ENCODE measurements at regions of chr1 and their contacts with region 1.

Region 1: DNA sequence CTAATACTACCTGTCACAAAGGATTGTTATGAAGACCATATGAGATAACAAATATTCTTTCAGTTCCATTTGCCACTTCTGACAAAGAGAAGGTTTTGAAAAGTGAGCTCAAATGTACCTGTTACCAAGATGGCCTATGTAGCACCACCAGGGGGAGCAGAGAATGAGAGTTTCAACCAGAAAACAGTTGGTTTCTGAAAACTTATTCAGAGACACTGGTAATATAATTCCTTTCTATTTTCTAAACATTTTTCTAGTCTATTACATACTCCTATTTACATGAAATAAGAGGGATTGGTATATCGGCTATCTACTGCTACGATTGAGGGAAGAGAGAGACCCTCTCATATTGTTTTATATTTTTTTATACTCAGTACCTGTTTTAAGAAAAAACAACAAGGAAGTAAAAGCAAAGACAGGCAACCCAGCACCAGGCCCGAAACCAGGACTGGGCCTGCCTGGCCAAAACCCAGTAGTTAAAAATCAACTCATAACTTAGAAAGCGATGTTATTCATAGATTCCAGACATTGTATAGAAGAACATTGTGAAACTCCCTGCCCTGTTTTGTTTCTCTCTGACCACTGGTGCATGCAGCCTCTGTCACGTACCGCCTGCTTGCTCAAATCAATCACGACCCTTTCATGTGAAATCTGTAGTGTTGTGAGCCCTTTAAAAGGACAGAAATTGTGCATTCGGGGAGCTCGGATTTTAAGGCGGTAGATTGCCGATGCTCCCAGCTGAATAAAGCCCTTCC is 48.3 kb downstream of the IL23R start:
- DNase-seq: peak; percentile 27
- H3K4me3 ChIP-seq: no peak overlapping the region
- H3K27ac ChIP-seq: no peak overlapping the region
- H3K4me1 ChIP-seq: no peaks in the 10 kb centered on the region
- H3K27me3 ChIP-seq: peaks cover 0 to 4% of the 10 kb centered on the region in 2 experiments
- CTCF ChIP-seq: peak; percentile 36 to 48
- POLR2A ChIP-seq: no peak

Region 2: DNA sequence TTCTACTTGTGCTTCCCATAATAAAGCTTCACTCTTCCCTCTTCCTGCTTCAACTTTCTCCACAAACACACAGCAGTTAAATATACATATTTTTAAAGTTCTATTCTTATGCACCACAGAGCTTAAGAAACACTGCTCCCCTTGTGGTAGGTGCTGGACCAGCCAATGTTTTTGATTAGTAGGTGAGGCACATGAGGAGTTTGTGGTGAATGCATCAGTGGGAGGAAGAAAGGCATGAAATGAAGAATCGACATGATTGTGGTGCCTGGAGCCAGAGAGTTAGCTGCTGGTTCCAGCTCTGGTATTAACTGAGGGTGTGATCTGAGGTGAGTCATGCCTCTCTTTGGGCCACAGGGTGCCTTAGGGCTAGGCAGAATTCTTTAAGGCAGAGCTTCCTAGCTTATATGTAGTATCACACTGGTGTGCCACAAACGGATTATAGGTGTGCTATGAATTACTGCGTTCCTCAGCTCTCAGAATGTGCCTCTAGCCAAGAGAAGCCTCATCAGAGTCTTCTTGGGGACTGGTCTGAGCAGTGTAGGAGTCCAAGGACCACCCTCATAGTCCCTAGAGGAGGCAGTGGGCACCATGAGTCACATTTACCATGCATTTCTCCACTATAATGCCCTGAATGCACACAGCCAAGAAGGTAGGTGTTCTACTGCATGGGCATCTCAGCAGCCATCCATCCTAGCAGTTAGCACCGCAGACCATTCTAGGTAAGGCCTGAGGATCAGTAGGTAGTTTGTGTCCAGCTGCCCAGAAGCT is 778.0 kb before region 1 on chr1:
- CTCF ChIA-PET with region 1: no interaction called
- POLR2A ChIA-PET with region 1: no interaction called
- dilution Hi-C with region 1: no loop called
- intact Hi-C with region 1: no loop called
- DNase-seq: peak; percentile 46
- H3K4me3 ChIP-seq: no peak overlapping the region
- H3K27ac ChIP-seq: no peak overlapping the region
- H3K4me1 ChIP-seq: peaks cover 34% of the 10 kb centered on the region
- H3K27me3 ChIP-seq: no peaks in the 10 kb centered on the region
- CTCF ChIP-seq: peak; percentile 13 to 31
- POLR2A ChIP-seq: no peak

Region 3: GRCh38 chr1:66764994-66765578 is 449.5 kb before region 1 on chr1:
- CTCF ChIA-PET with region 1: interaction called, 157 read pairs
- POLR2A ChIA-PET with region 1: no interaction called
- dilution Hi-C with region 1: no loop called
- intact Hi-C with region 1: loop called (anchors 1 kb)
- DNase-seq: peak; percentile 79
- H3K4me3 ChIP-seq: no peak overlapping the region
- H3K27ac ChIP-seq: no peak overlapping the region
- H3K4me1 ChIP-seq: no peaks in the 10 kb centered on the region
- H3K27me3 ChIP-seq: no peaks in the 10 kb centered on the region
- CTCF ChIP-seq: peak; percentile 48 to 54
- POLR2A ChIP-seq: no peak

Region 4: DNA sequence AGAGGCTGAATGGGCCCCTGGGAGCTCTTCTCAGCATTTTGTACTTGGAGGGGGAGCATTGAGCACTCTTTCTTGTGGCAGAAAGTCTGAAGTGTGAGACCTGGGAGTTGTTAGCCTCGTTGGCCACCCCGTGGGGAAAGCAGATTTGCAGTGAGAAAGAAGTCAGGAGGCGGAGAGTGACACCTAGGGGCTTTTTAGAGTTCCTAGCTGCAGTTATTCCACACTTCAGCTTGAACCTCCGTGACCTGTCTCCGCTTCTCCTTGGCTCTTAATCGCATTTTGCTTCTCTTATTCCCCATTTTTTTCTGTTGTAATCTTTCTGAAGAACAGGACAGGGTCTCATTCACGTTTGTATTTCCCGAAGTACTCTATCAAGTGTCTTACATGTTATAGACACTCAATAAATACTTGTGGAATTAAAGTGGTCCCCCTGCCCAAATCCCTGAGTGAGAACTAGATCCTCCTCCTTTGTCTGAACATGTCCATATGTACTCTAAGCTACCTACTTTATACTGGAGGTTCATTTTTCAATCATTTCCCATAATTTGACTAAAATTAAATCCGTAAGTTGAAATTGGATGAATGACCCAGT is 65.3 kb before region 1 on chr1:
- CTCF ChIA-PET with region 1: interaction called, 51 read pairs
- POLR2A ChIA-PET with region 1: no interaction called
- dilution Hi-C with region 1: no loop called
- intact Hi-C with region 1: loop called (anchors 5 kb)
- DNase-seq: peak; percentile 74
- H3K4me3 ChIP-seq: no peak overlapping the region
- H3K27ac ChIP-seq: no peak overlapping the region
- H3K4me1 ChIP-seq: no peaks in the 10 kb centered on the region
- H3K27me3 ChIP-seq: peaks cover 0 to 5% of the 10 kb centered on the region in 2 experiments
- CTCF ChIP-seq: peak; percentile 56 to 81
- POLR2A ChIP-seq: no peak

Region 5: DNA sequence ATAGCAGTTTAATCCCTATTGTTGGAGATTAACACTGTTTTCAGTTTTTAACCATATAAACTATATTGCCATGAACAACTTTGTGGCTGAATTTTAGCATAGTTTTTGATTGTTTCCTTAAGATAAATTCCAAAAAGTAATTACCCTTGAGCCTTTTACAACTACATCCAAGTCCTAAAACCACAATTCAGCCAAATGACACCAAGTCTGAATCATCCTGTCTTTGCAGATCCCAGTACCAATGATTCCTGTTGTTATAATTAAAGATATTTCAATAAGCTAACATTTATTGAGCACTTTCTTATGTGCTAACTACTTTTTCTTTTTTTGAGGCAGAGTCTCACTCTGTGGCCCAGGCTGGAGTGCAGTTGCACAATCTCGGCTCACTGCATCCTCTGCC is 12.7 kb before region 1 on chr1:
- CTCF ChIA-PET with region 1: interaction called, 34 read pairs
- POLR2A ChIA-PET with region 1: no interaction called
- dilution Hi-C with region 1: no loop called
- intact Hi-C with region 1: no loop called
- DNase-seq: no peak
- H3K4me3 ChIP-seq: no peak overlapping the region
- H3K27ac ChIP-seq: no peak overlapping the region
- H3K4me1 ChIP-seq: no peaks in the 10 kb centered on the region
- H3K27me3 ChIP-seq: peaks cover 1 to 2% of the 10 kb centered on the region in 2 experiments
- CTCF ChIP-seq: no peak
- POLR2A ChIP-seq: no peak

Region 6: GRCh38 chr1:67239738-67240137 is 25.1 kb after region 1 on chr1:
- CTCF ChIA-PET with region 1: interaction called, 36 read pairs
- POLR2A ChIA-PET with region 1: no interaction called
- dilution Hi-C with region 1: no loop called
- intact Hi-C with region 1: no loop called
- DNase-seq: no peak
- H3K4me3 ChIP-seq: no peak overlapping the region
- H3K27ac ChIP-seq: no peak overlapping the region
- H3K4me1 ChIP-seq: no peaks in the 10 kb centered on the region
- H3K27me3 ChIP-seq: peaks cover 12 to 15% of the 10 kb centered on the region in 2 experiments
- CTCF ChIP-seq: no peak
- POLR2A ChIP-seq: no peak

Region 7: DNA sequence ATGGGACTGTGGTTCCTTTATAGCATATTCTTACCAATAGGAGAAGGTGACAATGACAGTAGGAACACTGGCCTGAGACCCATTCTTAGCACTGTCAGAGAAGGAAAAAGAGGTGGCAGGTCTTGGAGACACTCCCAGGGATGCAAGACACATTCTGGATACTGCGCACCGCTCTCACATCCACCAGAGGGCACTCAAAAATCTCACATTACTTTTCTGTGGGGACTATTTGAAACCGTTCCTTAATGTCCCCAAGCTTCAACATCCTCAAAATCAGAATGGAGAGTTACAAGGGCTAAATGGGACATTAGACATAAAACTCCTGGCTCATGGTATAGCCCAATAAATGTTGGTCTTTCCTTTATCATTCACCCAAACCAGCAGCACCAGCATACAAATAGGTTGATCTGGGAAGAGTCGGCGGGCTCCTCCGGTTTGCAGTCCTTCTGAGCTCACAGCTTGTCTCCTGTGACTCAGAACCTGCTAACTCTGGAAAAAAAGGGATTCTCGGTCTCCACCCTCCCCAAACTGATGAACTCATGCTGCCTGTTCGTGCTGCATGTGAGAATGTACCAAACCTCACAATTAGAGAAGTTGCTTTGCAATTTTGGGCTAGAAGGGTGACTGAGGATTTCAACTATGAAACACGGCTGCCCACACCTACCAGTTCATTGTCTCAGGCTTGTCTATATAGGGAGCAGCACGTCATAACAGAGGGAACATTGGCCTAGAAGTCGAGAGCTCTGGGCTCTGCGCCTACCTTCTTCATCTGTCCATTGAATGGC is 133.3 kb after region 1 on chr1:
- CTCF ChIA-PET with region 1: interaction called, 15 read pairs
- POLR2A ChIA-PET with region 1: no interaction called
- dilution Hi-C with region 1: no loop called
- intact Hi-C with region 1: no loop called
- DNase-seq: peak; percentile 57
- H3K4me3 ChIP-seq: no peak overlapping the region
- H3K27ac ChIP-seq: no peak overlapping the region
- H3K4me1 ChIP-seq: no peaks in the 10 kb centered on the region
- H3K27me3 ChIP-seq: peaks cover 0 to 10% of the 10 kb centered on the region in 2 experiments
- CTCF ChIP-seq: peak; percentile 74 to 76
- POLR2A ChIP-seq: no peak

Region 8: GRCh38 chr1:67500413-67500959 is 285.9 kb after region 1 on chr1:
- CTCF ChIA-PET with region 1: interaction called, 262 read pairs
- POLR2A ChIA-PET with region 1: no interaction called
- dilution Hi-C with region 1: no loop called
- intact Hi-C with region 1: loop called (anchors 1 kb)
- DNase-seq: peak; percentile 77
- H3K4me3 ChIP-seq: no peak overlapping the region
- H3K27ac ChIP-seq: no peak overlapping the region
- H3K4me1 ChIP-seq: no peaks in the 10 kb centered on the region
- H3K27me3 ChIP-seq: peaks cover 6 to 14% of the 10 kb centered on the region in 2 experiments
- CTCF ChIP-seq: peak; percentile 97 to 98
- POLR2A ChIP-seq: no peak